PC-9 (cell line): ENCODE measurements at regions of chr13 and their contacts with region 1.

Region 1: DNA sequence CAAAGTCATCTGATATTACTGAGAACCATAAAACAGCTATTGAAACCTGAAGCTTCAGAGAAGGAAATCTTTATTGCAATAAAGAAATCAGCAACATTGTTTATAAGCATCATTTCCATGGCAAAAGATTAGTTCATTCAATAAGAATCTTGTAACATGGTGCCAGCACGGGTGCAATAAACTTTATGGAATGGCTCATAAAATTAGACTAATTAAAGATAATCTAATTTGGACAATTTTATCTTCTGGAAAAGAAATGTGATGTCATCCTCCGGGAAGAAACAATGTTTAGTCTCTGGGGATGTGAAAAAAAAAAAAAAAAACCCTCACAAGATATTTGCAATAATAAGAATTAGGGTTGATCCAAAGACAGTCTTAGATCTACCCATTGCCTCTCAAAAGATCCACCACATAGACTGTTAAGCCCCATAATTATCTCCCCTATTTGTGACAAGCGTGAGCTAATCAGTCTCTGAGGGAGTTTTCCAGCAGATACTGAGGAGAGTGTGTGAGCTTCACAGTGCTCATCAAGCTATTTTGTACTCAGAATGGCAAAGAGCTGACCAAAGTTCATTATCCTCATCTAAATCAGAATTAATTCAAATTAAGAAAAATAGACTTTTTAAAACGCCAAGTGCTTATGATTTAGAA is 297.0 kb upstream of the EDNRB start:
- DNase-seq: no peak
- H3K4me3 ChIP-seq: no peak overlapping the region
- H3K27ac ChIP-seq: no peak overlapping the region
- H3K4me1 ChIP-seq: no peaks in the 10 kb centered on the region
- H3K27me3 ChIP-seq: no peaks in the 10 kb centered on the region
- CTCF ChIP-seq: no peak

Region 2: DNA sequence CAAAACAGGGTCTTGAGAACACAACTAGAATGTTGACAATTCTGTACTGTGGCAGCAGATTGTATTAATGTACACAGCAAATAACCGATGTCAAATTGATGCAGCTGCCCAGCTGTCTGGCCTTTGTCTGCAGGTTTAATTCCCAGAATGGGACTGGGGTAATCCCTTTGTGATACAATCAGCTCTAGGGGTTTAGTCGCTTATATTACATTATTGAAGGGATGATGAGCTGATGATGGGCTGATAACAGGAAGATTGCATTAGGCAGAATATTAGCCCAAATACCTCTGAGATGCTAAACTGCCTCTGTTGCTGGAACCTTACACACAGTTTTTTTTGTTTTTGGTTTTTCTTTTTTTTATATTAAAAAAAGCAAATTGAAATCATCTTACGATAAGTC is 925.5 kb after region 1 on chr13:
- CTCF ChIA-PET with region 1: no interaction called
- POLR2A ChIA-PET with region 1: interaction called, 13 read pairs
- intact Hi-C with region 1: no loop called
- DNase-seq: no peak
- H3K4me3 ChIP-seq: no peak overlapping the region
- H3K27ac ChIP-seq: no peak overlapping the region
- H3K4me1 ChIP-seq: no peaks in the 10 kb centered on the region
- H3K27me3 ChIP-seq: no peaks in the 10 kb centered on the region
- CTCF ChIP-seq: no peak